ENCODE measurements at regions of chr18 and their contacts with region 1.

Region 1: DNA sequence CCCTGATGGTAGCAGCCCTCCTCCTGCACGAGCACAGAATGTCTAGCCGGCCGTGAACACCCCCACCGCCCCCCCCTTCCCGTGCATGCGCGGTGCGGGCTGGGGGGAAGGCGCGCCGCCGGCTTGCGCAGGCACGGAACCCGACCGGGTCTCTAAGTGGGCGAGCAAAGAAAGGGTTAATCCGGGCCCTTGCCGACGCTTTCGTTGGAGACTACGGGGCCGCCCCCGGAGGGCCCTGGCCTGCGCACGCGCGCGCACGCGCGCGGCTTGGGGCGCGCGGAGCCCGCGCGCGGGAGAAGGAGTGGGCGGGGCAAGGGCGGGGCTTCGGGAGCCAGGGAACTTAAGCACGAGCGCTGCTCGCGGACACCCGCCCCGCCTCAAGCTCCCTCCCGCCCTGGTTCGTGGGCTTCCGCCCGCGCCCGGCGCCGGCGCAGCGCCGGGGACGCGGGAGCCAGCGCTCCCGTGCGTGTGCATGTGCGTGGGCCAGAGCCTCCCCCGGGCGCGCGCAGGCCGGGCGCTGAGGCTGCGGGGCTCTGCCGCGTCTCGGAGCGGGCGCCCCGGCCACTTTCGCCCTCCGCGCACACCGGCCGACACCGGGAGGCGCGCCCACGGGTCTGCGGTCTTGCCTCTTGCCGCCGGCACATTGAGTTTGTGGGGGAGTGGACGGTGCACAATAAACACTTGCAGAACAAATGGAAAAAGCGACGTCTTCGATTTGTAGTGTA is 617 bp upstream of the ZBTB14 start:
- DNase-seq: peak; percentile 92
- H3K4me3 Mint-ChIP-seq: peak overlapping the region; percentile 97
- H3K27ac Mint-ChIP-seq: peak overlapping the region; percentile 99
- H3K4me1 Mint-ChIP-seq: peaks cover 17% of the 10 kb centered on the region
- H3K27me3 Mint-ChIP-seq: peaks cover 11% of the 10 kb centered on the region

Region 2: GRCh38 chr18:5237723-5238370 is 58.3 kb before region 1 on chr18:
- intact Hi-C with region 1: loop called (anchors 1 kb)
- DNase-seq: peak; percentile 85
- H3K4me3 Mint-ChIP-seq: peak overlapping the region; percentile 96
- H3K27ac Mint-ChIP-seq: peak overlapping the region; percentile 98
- H3K4me1 Mint-ChIP-seq: peaks cover 29% of the 10 kb centered on the region
- H3K27me3 Mint-ChIP-seq: peaks cover 7% of the 10 kb centered on the region

Region 3: DNA sequence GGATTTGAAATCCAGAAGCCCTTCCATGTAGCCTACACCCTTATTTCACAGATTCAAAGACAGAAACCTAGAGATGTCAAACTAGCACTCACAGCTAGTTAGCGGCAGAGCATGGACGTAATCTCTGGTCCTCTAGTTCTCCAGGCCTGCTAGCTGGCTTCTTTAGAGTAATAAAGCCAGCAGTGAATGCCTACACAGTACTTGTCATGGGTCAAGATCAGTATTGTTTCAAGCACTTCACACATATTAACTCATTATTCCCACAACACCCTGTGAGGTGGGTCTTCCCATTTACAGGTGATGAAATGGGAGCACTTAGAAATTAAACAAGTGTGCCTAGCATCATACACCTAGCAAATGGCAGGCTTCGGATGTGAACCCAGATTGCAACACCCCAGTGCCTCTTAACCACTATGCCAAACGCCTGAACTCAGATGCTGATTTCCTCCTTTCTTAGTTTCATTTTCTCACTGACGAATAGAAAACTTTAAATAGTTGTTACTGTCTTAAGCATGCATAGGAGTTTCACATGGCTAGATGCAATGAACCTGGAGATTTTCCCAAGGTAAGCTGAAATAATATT is 13.8 kb after region 1 on chr18:
- intact Hi-C with region 1: loop called (anchors 1 kb)
- DNase-seq: peak; percentile 17
- H3K4me3 Mint-ChIP-seq: peak overlapping the region; percentile 26
- H3K27ac Mint-ChIP-seq: peak overlapping the region; percentile 24
- H3K4me1 Mint-ChIP-seq: peaks cover 12% of the 10 kb centered on the region
- H3K27me3 Mint-ChIP-seq: peaks cover 1% of the 10 kb centered on the region

Region 4: DNA sequence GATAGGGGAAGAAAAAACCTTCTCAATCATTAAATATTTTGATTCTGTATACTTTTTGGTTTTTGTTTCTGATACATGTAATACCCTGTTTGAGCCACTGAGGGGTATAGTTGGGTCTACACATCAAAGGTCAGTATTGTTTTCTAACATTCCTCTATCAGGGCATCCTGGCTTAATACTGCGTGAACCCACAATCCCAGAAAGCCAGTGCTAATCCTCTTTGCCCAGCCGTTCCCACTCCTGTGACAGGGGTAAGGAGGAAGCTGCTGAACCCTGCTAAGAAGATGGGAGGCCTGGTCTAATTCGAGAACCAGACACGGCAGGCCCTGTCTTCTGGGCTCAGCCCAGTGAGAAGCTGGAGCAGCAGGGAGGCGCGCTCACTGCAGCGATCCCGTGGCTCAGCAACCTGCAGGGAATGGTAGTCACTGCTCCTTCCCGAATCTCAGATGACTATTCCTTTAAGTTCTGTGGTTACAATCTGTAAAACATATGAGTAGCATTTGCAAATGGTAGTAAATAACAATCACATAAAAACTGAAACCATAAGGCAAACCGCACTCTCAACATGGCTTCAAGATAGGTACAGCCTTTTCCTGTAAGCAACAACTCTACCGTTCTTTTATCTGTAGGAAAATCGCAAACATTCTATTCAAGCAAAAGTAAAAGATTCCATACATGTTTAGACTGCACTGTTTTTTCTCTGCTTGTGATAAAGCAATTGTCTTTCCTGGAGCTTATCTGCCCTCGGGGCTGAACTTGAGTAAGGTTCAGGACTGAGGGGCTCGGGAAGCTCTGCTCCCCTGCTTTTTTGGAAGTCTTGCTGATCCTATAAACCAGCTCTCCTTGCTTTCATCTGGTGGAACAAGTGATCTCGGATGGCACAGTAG is 160.7 kb after region 1 on chr18:
- intact Hi-C with region 1: loop called (anchors 5 kb)
- DNase-seq: no peak
- H3K4me3 Mint-ChIP-seq: peak overlapping the region; percentile 30
- H3K27ac Mint-ChIP-seq: peak overlapping the region; percentile 39
- H3K4me1 Mint-ChIP-seq: peaks cover 8% of the 10 kb centered on the region
- H3K27me3 Mint-ChIP-seq: no peaks in the 10 kb centered on the region

Region 5: GRCh38 chr18:5630057-5630899 is 334.1 kb after region 1 on chr18:
- intact Hi-C with region 1: loop called (anchors 5 kb)
- DNase-seq: peak; percentile 24
- H3K4me3 Mint-ChIP-seq: no peak overlapping the region
- H3K27ac Mint-ChIP-seq: no peak overlapping the region
- H3K4me1 Mint-ChIP-seq: peaks cover 7% of the 10 kb centered on the region
- H3K27me3 Mint-ChIP-seq: peaks cover 30% of the 10 kb centered on the region

Region 6: GRCh38 chr18:6004683-6005082 is 708.5 kb after region 1 on chr18:
- intact Hi-C with region 1: loop called (anchors 1 kb)
- DNase-seq: peak; percentile 43
- H3K4me3 Mint-ChIP-seq: no peak overlapping the region
- H3K27ac Mint-ChIP-seq: peak overlapping the region; percentile 82
- H3K4me1 Mint-ChIP-seq: peaks cover 38% of the 10 kb centered on the region
- H3K27me3 Mint-ChIP-seq: peaks cover 2% of the 10 kb centered on the region

Region 7: DNA sequence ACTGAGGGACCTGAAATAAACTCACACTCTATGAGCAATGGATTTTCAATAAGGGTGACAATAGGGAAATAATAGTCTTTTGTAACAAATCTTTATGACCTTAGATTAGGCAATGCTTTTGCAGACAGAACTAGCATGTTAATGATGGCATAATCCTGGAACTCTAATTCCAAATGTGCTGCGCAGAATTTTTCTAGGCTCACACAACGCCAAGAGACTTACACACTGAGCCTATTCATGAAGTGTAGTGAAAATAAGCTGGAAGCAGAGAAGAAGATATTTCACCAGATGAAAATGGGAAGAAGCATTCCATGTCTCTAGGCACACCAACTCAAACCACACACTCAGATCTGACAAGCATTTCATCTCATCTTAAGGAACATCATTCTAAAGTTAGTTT is 940.1 kb after region 1 on chr18:
- intact Hi-C with region 1: no loop called
- DNase-seq: no peak
- H3K4me3 Mint-ChIP-seq: no peak overlapping the region
- H3K27ac Mint-ChIP-seq: no peak overlapping the region
- H3K4me1 Mint-ChIP-seq: no peaks in the 10 kb centered on the region
- H3K27me3 Mint-ChIP-seq: no peaks in the 10 kb centered on the region

Region 8: GRCh38 chr18:6414118-6414722 is 1118.1 kb after region 1 on chr18:
- intact Hi-C with region 1: loop called (anchors 10 kb)
- DNase-seq: peak; percentile 45
- H3K4me3 Mint-ChIP-seq: peak overlapping the region; percentile 21
- H3K27ac Mint-ChIP-seq: no peak overlapping the region
- H3K4me1 Mint-ChIP-seq: peaks cover 9% of the 10 kb centered on the region
- H3K27me3 Mint-ChIP-seq: peaks cover 37% of the 10 kb centered on the region